Activated CD8-positive, alpha-beta T cell treated with anti-CD3 and anti-CD28 coated beads, Interleukin-2, amount 10 ng/mL, durations not matched to agents 7 days and 5 days (primary cell): ENCODE measurements at regions of chr16 and their contacts with region 1.

Region 1: GRCh38 chr16:88856828-88857733 is at the starts of genes GALNS and TRAPPC2L:
- DNase-seq: peak; percentile 99
- ATAC-seq: peak; percentile 86
- H3K4me3 Mint-ChIP-seq: peak within 1 kb of the TSS; percentile 97
- H3K27ac Mint-ChIP-seq: peak within 1 kb of the TSS; percentile 94
- H3K4me1 Mint-ChIP-seq: peaks cover 28% of the 10 kb centered on the region
- H3K27me3 Mint-ChIP-seq: no peaks in the 10 kb centered on the region
- total RNA-seq, gene GALNS: 31.1 to 33.3 TPM
- total RNA-seq, gene TRAPPC2L: 61.2 to 65.3 TPM

Region 2: DNA sequence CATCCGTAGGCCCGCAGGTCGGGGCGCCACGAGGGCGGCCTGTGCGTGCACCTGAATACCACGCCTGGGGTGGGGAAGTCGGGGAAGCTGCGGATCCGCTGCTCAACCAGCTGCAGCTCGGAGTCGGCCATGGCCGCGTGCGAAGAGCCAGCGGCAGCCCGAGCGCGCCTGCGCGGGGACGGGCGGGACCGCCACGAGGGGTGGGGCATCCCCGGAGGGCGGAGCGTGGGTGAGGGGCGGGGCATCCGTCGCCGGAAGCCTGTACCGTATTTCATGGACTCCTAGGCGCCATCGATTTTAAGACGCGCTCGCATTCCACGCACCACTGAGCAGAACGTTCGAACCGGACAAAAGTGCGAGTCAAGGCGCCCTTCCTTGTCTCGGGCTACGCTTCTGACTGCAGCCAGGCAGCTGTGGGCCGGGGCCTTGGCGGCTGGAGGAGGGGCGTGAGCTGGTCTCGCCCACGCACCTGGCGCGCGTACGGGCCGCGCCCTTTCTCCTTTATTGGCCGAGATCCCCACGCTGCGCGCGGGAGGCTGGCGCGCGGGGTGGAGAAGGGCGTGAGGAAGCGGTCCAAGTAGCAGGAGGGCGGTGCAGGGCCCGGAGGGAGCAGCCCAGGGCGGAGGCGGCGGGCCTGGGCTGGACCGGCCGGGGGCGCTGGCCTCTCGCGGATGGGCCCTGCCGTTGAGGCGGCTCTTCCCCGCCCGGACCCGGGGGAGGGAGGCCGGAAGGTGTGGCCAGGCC is 45.1 kb before region 1 on chr16 and contains the start of gene APRT:
- CTCF ChIA-PET with region 1: interaction called, 42 read pairs
- POLR2A ChIA-PET with region 1: interaction called, 11 read pairs
- DNase-seq: peak; percentile 97
- ATAC-seq: peak; percentile 84
- H3K4me3 Mint-ChIP-seq: peak within 1 kb of the TSS; percentile 85
- H3K27ac Mint-ChIP-seq: peak within 1 kb of the TSS; percentile 97
- H3K4me1 Mint-ChIP-seq: peaks cover 32% of the 10 kb centered on the region
- H3K27me3 Mint-ChIP-seq: no peaks in the 10 kb centered on the region
- total RNA-seq, gene APRT: 140 to 141 TPM

Region 3: DNA sequence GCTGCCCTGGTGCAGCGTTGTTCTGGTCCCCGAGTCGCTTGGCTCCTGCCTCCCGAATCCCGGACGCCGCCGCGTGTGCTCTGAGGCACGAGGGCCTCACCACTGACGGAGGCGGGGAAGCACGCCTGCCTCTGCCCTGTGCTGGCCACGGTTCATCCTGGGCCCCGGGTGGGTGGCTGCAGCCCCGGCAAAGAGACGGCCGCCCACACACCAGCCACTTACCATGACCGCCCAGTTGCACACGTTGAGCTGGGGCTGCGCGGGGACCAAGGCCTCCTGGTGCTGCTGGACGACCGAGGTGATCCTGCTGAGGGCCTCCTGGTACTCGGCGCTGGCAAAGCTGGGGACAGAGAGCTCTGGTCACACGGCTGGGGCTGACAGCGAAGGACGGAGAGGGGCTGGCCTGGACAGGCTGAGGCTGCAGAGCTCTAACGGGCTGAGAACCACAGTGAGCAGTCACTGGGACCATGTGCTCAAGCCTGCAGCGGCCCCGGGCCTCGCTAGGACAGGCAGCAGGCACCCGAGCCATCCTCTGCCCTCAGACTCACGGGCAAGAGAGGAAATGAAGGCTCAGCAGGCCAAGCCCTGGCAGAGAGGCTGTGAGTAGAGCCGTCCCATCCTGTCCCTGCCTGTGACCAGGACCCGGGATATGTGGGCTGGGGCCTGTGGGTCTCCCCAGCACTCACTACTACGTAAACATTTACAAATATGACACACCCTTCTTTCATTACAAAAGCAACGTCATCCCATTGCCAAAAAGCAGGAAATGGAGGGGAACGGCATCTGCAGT is 39.1 kb before region 1 on chr16:
- CTCF ChIA-PET with region 1: interaction called, 42 read pairs
- POLR2A ChIA-PET with region 1: interaction called, 10 read pairs
- DNase-seq: no peak
- ATAC-seq: no peak
- H3K4me3 Mint-ChIP-seq: no peak overlapping the region
- H3K27ac Mint-ChIP-seq: no peak overlapping the region
- H3K4me1 Mint-ChIP-seq: peaks cover 4% of the 10 kb centered on the region
- H3K27me3 Mint-ChIP-seq: no peaks in the 10 kb centered on the region